Breast epithelium (tissue), 4 donors: ENCODE measurements at regions of chr14 and their contacts with region 1.

Region 1: GRCh38 chr14:58362798-58363412 is 32.8 kb upstream of the TOMM20L start:
- DNase-seq: no peak
- H3K4me3 ChIP-seq: no peak overlapping the region
- H3K27ac ChIP-seq: no peak overlapping the region
- H3K4me1 ChIP-seq: no peaks in the 10 kb centered on the region
- H3K27me3 ChIP-seq: no peaks in the 10 kb centered on the region
- CTCF ChIP-seq: peak in 1 of 3 donors; percentile 14
- POLR2A ChIP-seq: no peak

Region 2: DNA sequence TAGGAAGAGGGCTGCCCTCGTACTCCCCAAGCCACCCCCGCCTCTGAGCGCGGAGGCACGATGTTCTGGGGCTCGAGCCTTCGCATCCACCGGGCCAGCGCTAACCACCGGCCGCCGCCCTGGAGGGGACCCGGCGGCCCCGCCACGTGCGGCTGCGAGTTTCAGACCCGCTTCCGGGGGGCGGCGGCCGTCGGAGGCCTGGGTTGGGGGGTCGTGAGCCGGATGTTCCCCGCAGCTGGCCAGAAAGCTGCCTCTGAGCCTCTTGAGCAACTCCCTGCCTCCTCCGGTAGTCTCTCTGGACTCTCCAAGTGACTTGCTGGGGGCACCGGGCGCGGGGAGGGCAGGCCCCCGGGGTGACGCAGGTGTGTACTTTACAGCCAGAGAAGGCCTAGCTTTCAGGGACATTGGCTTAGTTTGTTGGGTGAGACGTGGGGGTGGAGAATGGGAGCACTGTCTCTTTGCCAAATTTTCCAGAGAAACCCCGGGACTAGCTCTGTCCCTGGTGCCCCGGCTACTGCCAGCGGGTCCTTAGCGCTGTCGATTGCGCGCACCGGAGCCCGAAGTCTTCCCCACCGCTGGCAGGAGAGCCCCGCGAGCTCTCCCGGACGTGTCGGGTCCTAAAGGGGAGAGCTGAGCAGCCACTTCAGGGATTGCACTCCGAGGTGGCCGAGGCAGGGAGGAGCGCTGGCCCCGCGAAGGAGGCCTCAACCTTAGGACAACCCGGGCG is 1568.2 kb before region 1 on chr14:
- intact Hi-C with region 1: no loop called
- DNase-seq: no peak
- H3K4me3 ChIP-seq: peak overlapping the region in 1 of 3 donors; percentile 19
- H3K27ac ChIP-seq: no peak overlapping the region
- H3K4me1 ChIP-seq: no peaks in the 10 kb centered on the region
- H3K27me3 ChIP-seq: peaks cover 6 to 85% of the 10 kb centered on the region in 2 donors
- CTCF ChIP-seq: no peak
- POLR2A ChIP-seq: no peak

Region 3: GRCh38 chr14:58341152-58341748 is 21.7 kb before region 1 on chr14:
- intact Hi-C with region 1: loop called (anchors 2 kb)
- DNase-seq: no peak
- H3K4me3 ChIP-seq: no peak overlapping the region
- H3K27ac ChIP-seq: no peak overlapping the region
- H3K4me1 ChIP-seq: no peaks in the 10 kb centered on the region
- H3K27me3 ChIP-seq: no peaks in the 10 kb centered on the region
- CTCF ChIP-seq: no peak
- POLR2A ChIP-seq: no peak